ENCODE measurements at regions of chr5 and their contacts with region 1.

Region 1: DNA sequence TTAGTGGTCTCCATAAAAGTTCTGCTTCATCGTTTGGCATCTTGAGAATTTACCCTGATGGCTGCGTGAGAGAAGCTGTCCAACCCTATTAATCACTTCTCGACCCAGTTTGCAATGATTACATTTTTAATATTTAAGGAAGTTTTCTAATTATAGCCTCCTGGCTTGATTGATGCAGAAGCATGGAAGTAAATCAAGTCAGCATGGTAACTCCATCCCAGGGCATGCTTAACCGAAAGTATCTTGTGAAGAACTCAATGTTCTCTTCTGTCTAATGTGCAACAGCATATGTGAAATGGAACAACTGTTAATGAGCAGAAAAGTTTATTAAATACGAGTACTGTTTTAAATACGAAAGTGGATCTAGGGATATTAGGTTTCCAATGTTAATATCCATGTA is 278.9 kb upstream of the CD180 start:
- DNase-seq: no peak
- H3K4me3 ChIP-seq: no peak overlapping the region
- H3K27ac ChIP-seq: no peak overlapping the region
- H3K4me1 ChIP-seq: no peaks in the 10 kb centered on the region
- CTCF ChIP-seq: no peak

Region 2: GRCh38 chr5:67437905-67438845 is 37.3 kb before region 1 on chr5:
- CTCF ChIA-PET with region 1: no interaction called
- POLR2A ChIA-PET with region 1: no interaction called
- intact Hi-C with region 1: loop called (anchors 2 kb)
- DNase-seq: no peak
- H3K4me3 ChIP-seq: no peak overlapping the region
- H3K27ac ChIP-seq: no peak overlapping the region
- H3K4me1 ChIP-seq: no peaks in the 10 kb centered on the region
- CTCF ChIP-seq: no peak

Measured in OCI-LY7 (cell line).